PC-3 (cell line): ENCODE measurements at regions of chr3 and their contacts with region 1.

Region 1: DNA sequence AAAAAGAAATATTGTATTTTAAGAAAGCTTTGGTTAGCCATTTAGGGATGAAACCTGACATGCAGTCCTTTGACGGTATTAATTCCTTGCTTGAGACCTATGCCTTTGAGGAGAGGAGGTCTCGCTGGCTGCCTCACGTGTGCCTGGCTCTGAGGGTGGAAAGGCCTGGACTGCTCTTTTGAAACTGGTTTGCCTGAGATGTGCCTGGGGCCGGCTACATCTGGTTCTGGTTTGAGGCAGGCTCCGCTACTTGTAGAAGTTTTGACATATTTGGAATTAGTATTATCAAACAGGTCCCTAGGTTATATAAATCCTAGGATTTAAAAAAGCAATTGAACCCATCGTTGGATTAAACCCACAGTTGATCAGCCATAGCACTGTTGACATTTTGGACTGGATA is 6.5 kb downstream of the NISCH start:
- DNase-seq: no peak
- ATAC-seq: no peak
- H3K4me3 ChIP-seq: no peak overlapping the region
- H3K27ac ChIP-seq: no peak overlapping the region
- H3K4me1 ChIP-seq: peaks cover under 1% of the 10 kb centered on the region; the same call in 1 of the 2 replicates
- H3K27me3 ChIP-seq: no peaks in the 10 kb centered on the region
- CTCF ChIP-seq: no peak

Region 2: GRCh38 chr3:52428151-52429005 is 33.5 kb before region 1 on chr3:
- CTCF ChIA-PET with region 1: no interaction called
- POLR2A ChIA-PET with region 1: no interaction called
- intact Hi-C with region 1: no loop called
- DNase-seq: peak; percentile 82
- ATAC-seq: peak; percentile 99
- H3K4me3 ChIP-seq: no peak overlapping the region
- H3K27ac ChIP-seq: no peak overlapping the region
- H3K4me1 ChIP-seq: no peaks in the 10 kb centered on the region
- H3K27me3 ChIP-seq: no peaks in the 10 kb centered on the region
- CTCF ChIP-seq: peak; percentile 91

Region 3: GRCh38 chr3:52480768-52481715 is 19.2 kb after region 1 on chr3:
- CTCF ChIA-PET with region 1: no interaction called
- POLR2A ChIA-PET with region 1: interaction called, 10 read pairs
- intact Hi-C with region 1: no loop called
- DNase-seq: no peak
- ATAC-seq: no peak
- H3K4me3 ChIP-seq: no peak overlapping the region
- H3K27ac ChIP-seq: no peak overlapping the region
- H3K4me1 ChIP-seq: no peaks in the 10 kb centered on the region
- H3K27me3 ChIP-seq: no peaks in the 10 kb centered on the region
- CTCF ChIP-seq: no peak